ENCODE measurements at regions of chr7 and their contacts with region 1.

Region 1: GRCh38 chr7:106279425-106280197 is 5.2 kb downstream of the NAMPT start:
- DNase-seq: no peak

Region 2: DNA sequence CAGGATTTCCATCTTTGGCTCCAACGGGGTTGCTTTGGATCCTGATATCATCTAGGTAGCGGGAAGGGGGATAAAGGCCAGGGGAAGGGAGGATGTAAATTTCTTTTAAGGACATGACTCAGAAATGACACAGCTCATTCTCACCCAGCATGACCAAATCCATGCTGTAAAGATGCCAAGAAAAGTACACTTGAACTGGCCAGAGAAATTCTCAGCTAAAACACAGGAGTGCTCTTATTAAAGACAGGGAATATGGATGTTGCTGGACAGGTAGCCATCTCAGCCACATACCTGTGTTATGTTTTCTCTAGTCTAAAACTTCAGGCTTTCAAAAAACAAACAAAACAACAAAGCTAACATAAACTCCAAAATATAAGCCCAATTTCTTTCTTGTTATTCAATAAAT is 63.1 kb before region 1 on chr7:
- intact Hi-C with region 1: loop called in 1 of 2 experiments (anchors 2 kb)
- DNase-seq: no peak